Keratinocyte (primary cell): ENCODE measurements at regions of chr4 and their contacts with region 1.

Region 1: GRCh38 chr4:81040012-81040659 is 9.6 kb downstream of the BMP3 start:
- DNase-seq: no peak
- H3K4me3 ChIP-seq: no peak overlapping the region
- H3K27ac ChIP-seq: no peak overlapping the region
- H3K4me1 ChIP-seq: no peaks in the 10 kb centered on the region
- H3K27me3 ChIP-seq: no peaks in the 10 kb centered on the region
- CTCF ChIP-seq: peak in 2 of 3 experiments; percentile 62 to 63

Region 2: GRCh38 chr4:80365928-80366327 is 674.2 kb before region 1 on chr4:
- dilution Hi-C with region 1: loop called (anchors 25 kb)
- DNase-seq: peak; percentile 15
- H3K4me3 ChIP-seq: no peak overlapping the region
- H3K27ac ChIP-seq: no peak overlapping the region
- H3K4me1 ChIP-seq: no peaks in the 10 kb centered on the region
- H3K27me3 ChIP-seq: no peaks in the 10 kb centered on the region
- CTCF ChIP-seq: peak; percentile 65 to 89 (median 79)

Region 3: GRCh38 chr4:81106150-81106549 is 66.0 kb after region 1 on chr4:
- dilution Hi-C with region 1: no loop called
- DNase-seq: no peak
- H3K4me3 ChIP-seq: no peak overlapping the region
- H3K27ac ChIP-seq: no peak overlapping the region
- H3K4me1 ChIP-seq: no peaks in the 10 kb centered on the region
- H3K27me3 ChIP-seq: no peaks in the 10 kb centered on the region
- CTCF ChIP-seq: no peak